H1 (cell line): ENCODE measurements at regions of chr14 and their contacts with region 1.

Region 1: GRCh38 chr14:100155042-100155846 is 4.2 kb downstream of the DEGS2 start:
- DNase-seq: peak; percentile 73 to 93
- H3K4me3 ChIP-seq: no peak overlapping the region
- H3K27ac ChIP-seq: no peak overlapping the region
- H3K4me1 ChIP-seq: peaks cover 0 to 11% (median 2%) of the 10 kb centered on the region in 4 experiments; a peak in 5 of 7 replicates
- H3K27me3 ChIP-seq: peaks cover 12 to 31% (median 26%) of the 10 kb centered on the region in 4 experiments
- CTCF ChIP-seq: peak in 2 of 3 experiments; percentile 95 to 99; a peak in 3 of 4 replicates
- EP300 ChIP-seq: 0 out of 3 replicates have a peak, but pooled peaks of 1 of the 2 experiments have one; percentile 22
- POLR2A ChIP-seq: no peak
- RAD21 ChIP-seq: peak; percentile 78 to 82

Region 2: GRCh38 chr14:100114109-100114765 is 41.0 kb before region 1 on chr14:
- CTCF ChIA-PET with region 1: interaction called, 32 read pairs
- POLR2A ChIA-PET with region 1: no interaction called
- DNase-seq: no peak
- H3K4me3 ChIP-seq: no peak overlapping the region
- H3K27ac ChIP-seq: no peak overlapping the region
- H3K4me1 ChIP-seq: no peaks in the 10 kb centered on the region
- H3K27me3 ChIP-seq: no peaks in the 10 kb centered on the region
- CTCF ChIP-seq: no peak
- EP300 ChIP-seq: no peak
- POLR2A ChIP-seq: no peak
- RAD21 ChIP-seq: no peak

Region 3: GRCh38 chr14:100122481-100123222 is 32.6 kb before region 1 on chr14:
- CTCF ChIA-PET with region 1: interaction called, 307 read pairs
- POLR2A ChIA-PET with region 1: interaction called, 4 read pairs
- DNase-seq: no peak
- H3K4me3 ChIP-seq: no peak overlapping the region
- H3K27ac ChIP-seq: no peak overlapping the region
- H3K4me1 ChIP-seq: no peaks in the 10 kb centered on the region
- H3K27me3 ChIP-seq: no peaks in the 10 kb centered on the region
- CTCF ChIP-seq: no peak
- EP300 ChIP-seq: no peak
- POLR2A ChIP-seq: no peak
- RAD21 ChIP-seq: peak in 1 of 2 experiments; percentile 23; a peak in 1 of 4 replicates

Region 4: GRCh38 chr14:100140452-100141078 is 14.7 kb before region 1 on chr14:
- CTCF ChIA-PET with region 1: interaction called, 307 read pairs
- POLR2A ChIA-PET with region 1: interaction called, 4 read pairs
- DNase-seq: peak; percentile 58 to 78
- H3K4me3 ChIP-seq: no peak overlapping the region
- H3K27ac ChIP-seq: no peak overlapping the region; the same call in 1 of the 2 replicates
- H3K4me1 ChIP-seq: peaks cover 0 to 6% (median 5%) of the 10 kb centered on the region in 4 experiments; a peak in 5 of 7 replicates
- H3K27me3 ChIP-seq: no peaks in the 10 kb centered on the region; a peak in 1 of 7 replicates
- CTCF ChIP-seq: peak in 2 of 3 experiments; percentile 73 to 78; a peak in 3 of 4 replicates
- EP300 ChIP-seq: no peak
- POLR2A ChIP-seq: no peak
- RAD21 ChIP-seq: peak; percentile 56 to 70

Region 5: DNA sequence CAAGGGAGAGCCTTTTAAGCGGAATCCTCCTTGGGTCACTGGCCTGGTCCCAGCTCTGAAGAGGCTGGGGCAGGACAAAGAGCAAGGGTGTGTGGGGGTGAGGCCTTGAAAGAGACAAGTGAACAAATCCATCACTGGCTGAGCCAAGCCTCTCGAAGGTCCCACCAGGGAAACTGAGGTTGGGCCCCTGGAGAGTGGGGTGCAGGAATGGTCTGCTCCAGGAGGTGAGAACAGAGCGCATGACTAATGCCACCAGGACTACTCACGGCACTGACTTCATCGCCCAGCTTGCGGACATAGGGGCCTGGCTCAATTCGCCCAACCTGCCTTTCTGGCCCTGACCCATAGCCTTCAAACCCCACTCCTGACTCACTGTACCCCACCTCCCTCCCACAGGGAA is 23.4 kb after region 1 on chr14:
- CTCF ChIA-PET with region 1: interaction called, 12 read pairs
- POLR2A ChIA-PET with region 1: no interaction called
- DNase-seq: no peak
- H3K4me3 ChIP-seq: no peak overlapping the region
- H3K27ac ChIP-seq: no peak overlapping the region
- H3K4me1 ChIP-seq: no peaks in the 10 kb centered on the region; a peak in 1 of 7 replicates
- H3K27me3 ChIP-seq: no peaks in the 10 kb centered on the region
- CTCF ChIP-seq: no peak
- EP300 ChIP-seq: no peak
- POLR2A ChIP-seq: no peak
- RAD21 ChIP-seq: no peak

Region 6: DNA sequence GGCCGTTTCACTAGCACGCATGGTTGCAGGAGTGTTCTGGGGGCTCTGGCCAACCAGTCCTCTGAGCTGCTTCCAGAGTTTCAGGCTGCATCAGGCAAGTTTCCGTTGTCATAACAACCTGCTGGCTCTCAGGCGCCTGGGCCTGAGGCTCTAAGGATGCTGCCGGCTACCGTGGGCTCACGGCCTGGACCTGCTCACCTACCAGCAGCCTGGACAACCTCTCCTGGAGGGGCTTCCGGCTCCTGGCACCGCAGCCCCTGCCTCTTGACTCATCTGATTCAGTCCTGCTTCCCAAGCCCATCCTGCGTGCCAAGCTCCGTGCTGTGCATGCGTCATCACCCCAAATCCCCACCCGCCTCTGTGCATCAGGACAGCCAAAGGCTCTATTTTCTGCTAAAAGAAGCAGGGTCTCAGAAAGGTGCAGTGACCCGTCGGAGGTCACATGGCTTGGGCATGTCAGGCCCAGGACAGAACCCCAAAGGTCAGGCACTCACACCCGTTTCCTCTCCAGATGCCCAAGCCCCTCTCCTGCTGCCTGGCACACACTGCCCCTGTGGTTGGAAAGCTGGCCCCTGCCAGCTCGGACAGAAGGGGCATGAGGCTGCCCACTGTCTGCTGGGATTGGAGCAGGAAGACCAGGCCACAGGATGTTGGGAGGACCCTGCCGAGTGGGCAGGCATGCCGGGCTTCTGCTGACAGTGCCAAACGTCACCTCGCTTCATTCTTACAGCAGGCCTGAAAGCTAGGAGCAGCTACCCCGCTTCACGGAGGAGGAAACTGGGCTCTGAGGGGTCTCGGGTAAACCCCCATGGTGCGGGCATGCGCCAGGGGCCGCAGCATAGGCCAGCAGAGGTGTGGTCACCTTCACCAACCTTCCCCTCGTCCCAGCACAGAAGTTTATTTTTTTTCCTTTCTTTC is 426.2 kb after region 1 on chr14:
- CTCF ChIA-PET with region 1: no interaction called
- POLR2A ChIA-PET with region 1: no interaction called
- DNase-seq: no peak
- H3K4me3 ChIP-seq: no peak overlapping the region
- H3K27ac ChIP-seq: no peak overlapping the region
- H3K4me1 ChIP-seq: peaks cover 0 to 4% (median 0%) of the 10 kb centered on the region in 4 experiments; a peak in 2 of 7 replicates
- H3K27me3 ChIP-seq: peaks cover 10 to 16% (median 13%) of the 10 kb centered on the region in 4 experiments
- CTCF ChIP-seq: no peak
- EP300 ChIP-seq: no peak
- POLR2A ChIP-seq: no peak
- RAD21 ChIP-seq: no peak